Activated CD4-positive, alpha-beta T cell treated with anti-CD3 and anti-CD28 coated beads for 36 hours (primary cell): ENCODE measurements at regions of chr7 and their contacts with region 1.

Region 1: GRCh38 chr7:131231381-131232220 is 96.1 kb upstream of the MKLN1 start:
- DNase-seq: peak; percentile 77
- ATAC-seq: peak; percentile 72
- H3K4me3 Mint-ChIP-seq: peak overlapping the region; percentile 56
- H3K27ac Mint-ChIP-seq: peak overlapping the region; percentile 93
- H3K4me1 Mint-ChIP-seq: peaks cover 47% of the 10 kb centered on the region
- H3K27me3 Mint-ChIP-seq: no peaks in the 10 kb centered on the region

Region 2: GRCh38 chr7:130966246-130967009 is 265.2 kb before region 1 on chr7:
- CTCF ChIA-PET with region 1: no interaction called
- POLR2A ChIA-PET with region 1: no interaction called
- intact Hi-C with region 1: loop called (anchors 5 kb)
- DNase-seq: peak; percentile 39
- ATAC-seq: peak; percentile 3
- H3K4me3 Mint-ChIP-seq: peak overlapping the region; percentile 11
- H3K27ac Mint-ChIP-seq: peak overlapping the region; percentile 87
- H3K4me1 Mint-ChIP-seq: peaks cover 73% of the 10 kb centered on the region
- H3K27me3 Mint-ChIP-seq: no peaks in the 10 kb centered on the region

Region 3: GRCh38 chr7:131188367-131189339 is 42.9 kb before region 1 on chr7:
- CTCF ChIA-PET with region 1: interaction called, 4 read pairs
- POLR2A ChIA-PET with region 1: interaction called, 7 read pairs
- intact Hi-C with region 1: loop called (anchors 1 kb)
- DNase-seq: peak; percentile 65
- ATAC-seq: peak; percentile 84
- H3K4me3 Mint-ChIP-seq: peak overlapping the region; percentile 58
- H3K27ac Mint-ChIP-seq: peak overlapping the region; percentile 96
- H3K4me1 Mint-ChIP-seq: peaks cover 55% of the 10 kb centered on the region
- H3K27me3 Mint-ChIP-seq: no peaks in the 10 kb centered on the region

Region 4: DNA sequence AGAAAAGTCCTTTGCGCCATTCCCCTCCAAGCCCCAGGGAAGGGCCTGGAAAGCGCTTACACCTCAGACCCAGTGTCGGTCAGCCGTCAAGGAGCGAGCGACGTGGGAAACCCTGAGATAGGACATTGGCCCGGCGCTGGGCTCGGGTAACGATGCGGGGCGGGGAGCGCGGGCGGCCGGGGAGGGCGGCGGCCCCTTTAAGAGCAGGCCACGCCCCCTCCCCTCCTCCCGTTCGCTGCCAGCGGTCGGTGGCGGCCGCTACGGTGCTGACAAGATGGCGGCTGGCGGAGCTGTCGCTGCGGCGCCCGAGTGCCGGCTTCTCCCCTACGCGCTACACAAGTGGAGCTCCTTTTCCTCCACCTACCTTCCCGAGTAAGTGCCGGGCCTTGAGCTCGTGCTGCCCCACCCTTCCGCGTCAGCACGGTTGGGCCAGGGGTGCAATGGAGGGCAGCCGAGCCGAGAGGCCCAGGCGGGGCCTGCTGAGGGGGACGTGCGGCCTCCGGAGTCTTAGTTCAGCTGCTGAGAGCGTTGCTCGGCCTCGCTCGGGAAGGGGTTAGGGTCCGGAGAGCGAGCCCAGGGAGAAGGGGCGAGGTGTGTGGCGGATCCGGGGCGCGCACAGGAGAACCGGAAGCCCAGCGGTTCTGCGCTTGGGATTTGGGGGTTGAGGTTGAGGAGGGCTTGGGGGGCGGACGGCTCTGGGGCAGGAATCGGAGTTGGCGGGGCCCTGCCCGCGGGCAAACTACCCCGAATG is 96.2 kb after region 1 on chr7 and contains the start of gene MKLN1:
- CTCF ChIA-PET with region 1: no interaction called
- POLR2A ChIA-PET with region 1: interaction called, 6 read pairs
- intact Hi-C with region 1: loop called (anchors 1 to 2 kb)
- DNase-seq: peak; percentile 95
- ATAC-seq: peak; percentile 94
- H3K4me3 Mint-ChIP-seq: peak within 1 kb of the TSS; percentile 94
- H3K27ac Mint-ChIP-seq: peak within 1 kb of the TSS; percentile 97
- H3K4me1 Mint-ChIP-seq: peaks cover 60% of the 10 kb centered on the region
- H3K27me3 Mint-ChIP-seq: no peaks in the 10 kb centered on the region
- total RNA-seq, gene MKLN1: 40.1 to 42.9 TPM

Region 5: GRCh38 chr7:131370523-131370968 is 138.9 kb after region 1 on chr7:
- CTCF ChIA-PET with region 1: no interaction called
- POLR2A ChIA-PET with region 1: no interaction called
- intact Hi-C with region 1: loop called (anchors 5 kb)
- DNase-seq: peak; percentile 30
- ATAC-seq: peak; percentile 64
- H3K4me3 Mint-ChIP-seq: no peak overlapping the region
- H3K27ac Mint-ChIP-seq: no peak overlapping the region
- H3K4me1 Mint-ChIP-seq: peaks cover 70% of the 10 kb centered on the region
- H3K27me3 Mint-ChIP-seq: no peaks in the 10 kb centered on the region

Region 6: GRCh38 chr7:131383417-131384285 is 152.1 kb after region 1 on chr7:
- CTCF ChIA-PET with region 1: no interaction called
- POLR2A ChIA-PET with region 1: no interaction called
- intact Hi-C with region 1: loop called in 1 of 2 experiments (anchors 5 kb)
- DNase-seq: no peak
- ATAC-seq: peak; percentile 53
- H3K4me3 Mint-ChIP-seq: no peak overlapping the region
- H3K27ac Mint-ChIP-seq: peak overlapping the region; percentile 12
- H3K4me1 Mint-ChIP-seq: peaks cover 40% of the 10 kb centered on the region
- H3K27me3 Mint-ChIP-seq: no peaks in the 10 kb centered on the region

Region 7: GRCh38 chr7:131642429-131642828 is 410.8 kb after region 1 on chr7:
- CTCF ChIA-PET with region 1: no interaction called
- POLR2A ChIA-PET with region 1: no interaction called
- intact Hi-C with region 1: no loop called
- DNase-seq: no peak
- ATAC-seq: no peak
- H3K4me3 Mint-ChIP-seq: no peak overlapping the region
- H3K27ac Mint-ChIP-seq: no peak overlapping the region
- H3K4me1 Mint-ChIP-seq: no peaks in the 10 kb centered on the region
- H3K27me3 Mint-ChIP-seq: peaks cover 11% of the 10 kb centered on the region